Activated T-helper 2 cell treated with anti-CD3 and anti-CD28 coated beads, Interferon-gamma antibody, Interleukin-2, Interleukin-4, amounts not matched to agents 10 μg/mL and 5 μg/mL and 100 μg/mL, durations not matched to agents 14 hours and 24 hours and 36 hours (primary cell): ENCODE measurements at regions of chr16 and their contacts with region 1.

Region 1: DNA sequence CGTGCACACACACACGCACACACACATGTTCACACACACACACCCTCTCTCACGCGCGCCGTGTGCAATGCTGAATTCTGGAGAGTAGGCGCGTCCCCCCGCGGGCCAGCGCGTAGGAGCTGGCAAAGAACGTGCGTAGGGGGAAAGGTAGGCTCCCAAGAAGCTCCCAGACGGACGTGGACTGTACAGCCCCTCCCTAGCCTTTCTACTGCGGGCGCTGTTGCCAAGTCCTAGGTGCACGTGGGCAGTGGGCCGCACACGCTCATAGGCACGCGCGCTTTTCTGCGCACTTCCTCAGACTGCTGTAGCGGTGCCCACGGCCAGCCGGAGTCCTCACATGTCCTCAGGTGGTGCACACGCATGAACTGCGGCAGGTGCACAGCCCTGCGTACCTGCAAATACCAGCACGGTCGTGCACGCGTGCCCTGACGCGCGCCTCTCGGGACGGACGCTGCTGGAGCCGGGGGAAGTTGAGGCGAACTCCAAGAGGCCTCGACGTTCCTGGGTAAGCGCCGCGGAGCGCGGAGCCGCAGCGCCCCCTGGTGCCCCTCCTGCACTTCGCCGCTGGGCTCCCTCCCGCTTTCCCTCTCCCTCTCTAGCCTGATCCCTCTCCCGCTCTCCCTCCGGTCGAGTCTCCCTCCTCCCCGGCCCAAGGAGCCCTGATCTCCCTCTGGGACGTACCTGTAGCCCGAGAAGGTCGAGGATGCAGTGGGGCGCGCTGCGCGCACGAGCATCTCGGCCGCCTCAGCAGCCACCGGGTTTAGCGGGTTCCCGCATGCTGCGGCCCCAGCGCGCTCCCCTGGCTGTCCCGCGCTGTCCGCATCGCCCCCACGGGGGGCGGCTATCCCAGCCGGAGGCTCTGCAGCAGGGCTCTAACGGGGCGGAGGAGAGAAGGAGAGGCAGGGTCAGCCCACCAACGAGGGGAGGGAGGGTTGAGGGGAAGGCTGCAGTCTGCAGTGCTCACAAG is 749 bp downstream of the GRIN2A start:
- DNase-seq: peak; percentile 20
- H3K4me3 Mint-ChIP-seq: peak overlapping the region; percentile 3
- H3K27ac Mint-ChIP-seq: no peak overlapping the region
- H3K4me1 Mint-ChIP-seq: no peaks in the 10 kb centered on the region
- H3K27me3 Mint-ChIP-seq: peaks cover 37% of the 10 kb centered on the region

Region 2: GRCh38 chr16:9159839-9160550 is 1021.5 kb before region 1 on chr16:
- intact Hi-C with region 1: loop called (anchors 2 kb)
- DNase-seq: peak; percentile 39
- H3K4me3 Mint-ChIP-seq: no peak overlapping the region
- H3K27ac Mint-ChIP-seq: no peak overlapping the region
- H3K4me1 Mint-ChIP-seq: peaks cover 7% of the 10 kb centered on the region
- H3K27me3 Mint-ChIP-seq: peaks cover 3% of the 10 kb centered on the region